PC-3 (cell line): ENCODE measurements at regions of chr5 and their contacts with region 1.

Region 1: DNA sequence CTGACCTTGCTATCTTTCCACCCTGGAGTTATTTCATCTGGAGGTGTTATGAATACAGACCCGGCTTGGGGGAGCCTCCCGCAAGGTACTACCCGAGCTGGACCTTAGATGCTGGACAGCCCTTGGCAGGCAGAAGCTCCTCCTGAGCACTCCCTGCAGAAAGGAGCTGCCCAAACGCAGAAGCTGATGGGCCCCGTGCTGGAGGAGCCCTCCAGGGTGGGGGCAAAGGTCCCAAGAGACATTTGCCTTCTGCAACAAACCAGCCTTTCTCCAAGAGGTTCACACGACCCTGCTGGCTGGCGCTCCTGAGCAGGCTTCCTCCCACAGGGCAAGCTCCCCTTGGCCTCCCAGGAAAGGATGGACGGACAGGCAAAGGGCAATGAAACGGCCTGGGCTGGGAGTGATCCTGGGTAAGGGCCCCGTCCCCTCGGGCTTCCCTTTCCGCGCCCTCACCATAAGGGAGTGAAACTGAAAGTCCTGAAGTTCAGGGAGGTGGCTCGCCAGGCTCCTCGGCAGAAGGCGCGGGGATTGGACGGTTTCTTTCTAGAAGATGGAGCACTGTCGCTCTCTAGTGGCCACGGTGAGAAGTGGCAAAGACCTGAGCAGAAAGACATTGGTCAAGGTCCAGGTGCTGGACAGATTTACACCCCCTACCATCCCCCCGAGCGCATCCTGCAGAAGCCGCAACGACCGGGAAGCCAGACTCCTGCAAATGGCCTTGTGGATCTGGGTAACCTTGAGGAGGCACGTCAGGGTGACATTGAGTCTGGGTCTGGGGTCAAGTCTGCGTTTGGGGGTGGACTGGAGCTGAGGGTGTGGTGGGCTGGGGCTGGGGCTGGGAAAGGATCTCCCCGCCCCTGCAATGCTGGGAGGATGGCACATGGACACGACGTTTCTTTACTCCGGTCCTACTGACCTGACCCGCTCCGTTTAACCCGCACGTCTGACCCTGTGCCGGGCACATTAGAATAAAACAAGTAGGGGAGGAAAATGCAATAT is 56.4 kb downstream of the NEURL1B start:
- DNase-seq: peak; percentile 89
- ATAC-seq: peak; percentile 80
- H3K4me3 ChIP-seq: peak overlapping the region; percentile 69
- H3K27ac ChIP-seq: no peak overlapping the region
- H3K4me1 ChIP-seq: 0 out of 2 replicates have a peak, but pooled peaks cover 5% of the 10 kb centered on the region
- H3K27me3 ChIP-seq: peaks cover 15% of the 10 kb centered on the region
- CTCF ChIP-seq: peak; percentile 92

Region 2: GRCh38 chr5:172216345-172216744 is 481.1 kb before region 1 on chr5:
- CTCF ChIA-PET with region 1: no interaction called
- POLR2A ChIA-PET with region 1: no interaction called
- intact Hi-C with region 1: no loop called
- DNase-seq: no peak
- ATAC-seq: no peak
- H3K4me3 ChIP-seq: no peak overlapping the region
- H3K27ac ChIP-seq: no peak overlapping the region
- H3K4me1 ChIP-seq: no peaks in the 10 kb centered on the region
- H3K27me3 ChIP-seq: no peaks in the 10 kb centered on the region
- CTCF ChIP-seq: no peak

Region 3: DNA sequence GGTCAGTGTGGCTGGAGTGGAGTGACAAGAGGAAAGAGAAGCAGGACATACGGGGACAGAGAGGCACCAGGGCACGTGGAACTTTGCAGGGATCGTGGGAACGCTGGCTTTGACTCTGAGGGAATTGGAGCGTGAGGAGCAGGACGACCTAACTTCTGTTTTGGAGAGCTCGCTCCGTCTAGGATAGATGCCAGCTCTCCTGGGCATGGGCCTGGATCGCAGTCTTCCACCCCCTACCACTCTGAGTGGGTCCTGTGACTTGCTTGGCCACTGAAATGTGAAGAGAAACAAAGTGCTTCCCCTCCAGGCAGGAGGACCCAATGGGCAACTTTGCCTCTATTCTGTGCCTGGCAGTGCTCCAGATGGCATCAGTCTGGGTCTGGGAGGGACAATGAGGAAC is 234.4 kb before region 1 on chr5:
- CTCF ChIA-PET with region 1: interaction called, 5 read pairs
- POLR2A ChIA-PET with region 1: no interaction called
- intact Hi-C with region 1: loop called (anchors 5 kb)
- DNase-seq: no peak
- ATAC-seq: no peak
- H3K4me3 ChIP-seq: no peak overlapping the region
- H3K27ac ChIP-seq: no peak overlapping the region
- H3K4me1 ChIP-seq: no peaks in the 10 kb centered on the region
- H3K27me3 ChIP-seq: peaks cover 4% of the 10 kb centered on the region; the same call in 1 of the 2 replicates
- CTCF ChIP-seq: no peak

Region 4: DNA sequence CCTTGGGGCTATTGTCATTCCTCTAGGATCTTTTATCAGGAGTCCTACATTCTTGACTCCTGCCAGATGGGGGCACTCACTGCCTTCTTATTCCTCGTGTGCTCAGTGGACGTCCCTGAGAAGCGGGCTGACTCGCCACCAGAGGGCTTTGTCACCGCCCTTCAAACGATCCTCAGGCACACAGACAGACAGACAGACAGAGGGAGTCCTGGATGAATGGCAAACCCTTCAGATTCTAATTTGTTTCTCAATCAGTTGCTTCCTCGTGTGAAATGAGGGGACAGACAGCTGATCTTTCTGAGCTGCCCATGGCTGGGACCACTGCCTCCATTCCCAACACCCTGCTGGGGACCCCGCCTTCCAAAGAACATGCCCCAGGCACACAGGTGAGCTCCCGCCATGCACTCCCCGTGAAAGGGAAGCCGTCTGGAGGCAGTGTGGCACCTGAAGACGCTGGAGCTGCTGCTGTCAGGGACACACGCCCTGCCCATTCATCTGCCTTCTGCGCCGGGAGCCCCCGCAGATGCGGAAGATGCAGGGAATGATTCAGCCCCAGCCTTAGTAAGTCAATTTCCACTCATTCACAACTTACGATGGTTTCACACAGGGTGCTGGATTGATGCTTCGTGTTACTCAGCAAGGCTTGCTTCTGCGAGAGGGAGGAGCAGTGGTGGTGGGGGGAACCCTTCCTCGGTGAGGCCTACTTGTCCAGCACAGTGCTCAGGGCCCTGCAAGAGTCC is 218.2 kb before region 1 on chr5:
- CTCF ChIA-PET with region 1: no interaction called
- POLR2A ChIA-PET with region 1: no interaction called
- intact Hi-C with region 1: loop called (anchors 1 kb)
- DNase-seq: peak; percentile 92
- ATAC-seq: peak; percentile 99
- H3K4me3 ChIP-seq: no peak overlapping the region
- H3K27ac ChIP-seq: no peak overlapping the region
- H3K4me1 ChIP-seq: no peaks in the 10 kb centered on the region
- H3K27me3 ChIP-seq: no peaks in the 10 kb centered on the region
- CTCF ChIP-seq: peak; percentile 88

Region 5: DNA sequence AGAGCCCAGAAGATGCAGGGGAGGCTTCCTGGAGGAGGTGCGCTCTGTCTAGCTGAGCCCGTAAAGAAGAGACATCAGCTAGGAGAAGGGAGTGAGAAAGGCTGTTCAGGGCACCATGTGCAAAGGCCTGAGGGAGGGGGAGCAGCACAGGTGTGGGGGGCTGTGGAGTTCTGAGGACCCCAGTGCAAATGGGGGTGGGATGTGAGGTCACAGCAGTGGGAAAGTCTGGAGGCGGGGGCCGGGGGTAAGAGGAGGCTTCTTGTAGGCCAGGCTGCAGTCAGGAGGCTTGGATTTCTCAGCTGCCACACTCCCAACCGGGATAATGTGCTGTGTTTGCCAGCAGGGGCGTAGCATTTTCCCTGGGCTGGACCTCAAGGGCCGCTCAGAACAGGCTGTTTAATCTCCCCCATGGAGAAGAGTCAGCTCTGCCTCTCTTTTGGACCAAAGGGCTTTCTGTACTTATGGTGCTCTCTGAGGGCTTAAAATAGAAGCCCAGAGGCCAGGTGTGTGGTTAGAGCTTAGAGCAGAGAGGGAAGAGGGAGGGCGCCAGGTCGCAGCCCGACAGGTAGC is 50.6 kb before region 1 on chr5:
- CTCF ChIA-PET with region 1: interaction called, 3 read pairs
- POLR2A ChIA-PET with region 1: no interaction called
- intact Hi-C with region 1: loop called (anchors 5 kb)
- DNase-seq: no peak
- ATAC-seq: no peak
- H3K4me3 ChIP-seq: no peak overlapping the region
- H3K27ac ChIP-seq: no peak overlapping the region
- H3K4me1 ChIP-seq: peaks cover 8% of the 10 kb centered on the region; the same call in 1 of the 2 replicates
- H3K27me3 ChIP-seq: peaks cover 3% of the 10 kb centered on the region; the same call in 1 of the 2 replicates
- CTCF ChIP-seq: no peak

Region 6: DNA sequence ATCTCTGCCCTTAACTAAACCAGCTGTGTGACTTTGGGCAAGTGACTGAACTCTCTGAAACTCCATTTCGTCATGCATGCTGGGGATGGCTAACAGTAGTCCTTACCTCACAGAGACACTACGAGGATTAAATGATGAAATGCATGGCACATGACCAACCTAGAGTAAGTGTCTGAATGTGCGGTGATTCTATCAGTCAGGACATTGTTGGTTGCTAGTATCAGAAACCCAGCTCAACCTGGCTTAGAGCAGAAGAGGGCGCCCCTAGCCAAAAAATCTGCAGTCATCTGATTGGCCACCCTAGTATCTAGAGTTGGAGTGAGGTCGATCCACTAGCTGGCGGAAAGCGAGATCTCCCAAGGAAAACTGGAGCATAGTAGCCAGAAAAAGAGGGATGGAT is 31.2 kb before region 1 on chr5:
- CTCF ChIA-PET with region 1: interaction called, 3 read pairs
- POLR2A ChIA-PET with region 1: no interaction called
- intact Hi-C with region 1: loop called (anchors 1 kb)
- DNase-seq: peak; percentile 19
- ATAC-seq: no peak
- H3K4me3 ChIP-seq: no peak overlapping the region
- H3K27ac ChIP-seq: no peak overlapping the region
- H3K4me1 ChIP-seq: no peaks in the 10 kb centered on the region
- H3K27me3 ChIP-seq: no peaks in the 10 kb centered on the region
- CTCF ChIP-seq: peak; percentile 24; the same call in 1 of the 2 replicates